ENCODE measurements at regions of chr11 and their contacts with region 1.

Region 1: GRCh38 chr11:101323997-101324396 is 194.4 kb upstream of the PGR start:
- DNase-seq: no peak
- ATAC-seq: peak; percentile 58; the same call in 1 of the 2 replicates
- H3K4me3 ChIP-seq: no peak overlapping the region
- H3K27ac ChIP-seq: no peak overlapping the region
- H3K4me1 ChIP-seq: no peaks in the 10 kb centered on the region
- H3K27me3 ChIP-seq: peaks cover 15% of the 10 kb centered on the region
- CTCF ChIP-seq: peak in 2 of 3 experiments; percentile 11 to 33; a peak in 1 of 6 replicates
- POLR2A ChIP-seq: no peak
- RAD21 ChIP-seq: peak; percentile 50

Region 2: GRCh38 chr11:100980156-100980555 is 343.8 kb before region 1 on chr11:
- CTCF ChIA-PET with region 1: interaction called, 10 read pairs
- POLR2A ChIA-PET with region 1: no interaction called
- RAD21 ChIA-PET with region 1: no interaction called
- intact Hi-C with region 1: loop called (anchors 2 kb)
- DNase-seq: no peak
- ATAC-seq: no peak
- H3K4me3 ChIP-seq: no peak overlapping the region
- H3K27ac ChIP-seq: no peak overlapping the region
- H3K4me1 ChIP-seq: no peaks in the 10 kb centered on the region
- H3K27me3 ChIP-seq: no peaks in the 10 kb centered on the region
- CTCF ChIP-seq: peak; percentile 28 to 43 (median 34); a peak in 5 of 6 replicates
- POLR2A ChIP-seq: no peak
- RAD21 ChIP-seq: peak; percentile 54

Region 3: DNA sequence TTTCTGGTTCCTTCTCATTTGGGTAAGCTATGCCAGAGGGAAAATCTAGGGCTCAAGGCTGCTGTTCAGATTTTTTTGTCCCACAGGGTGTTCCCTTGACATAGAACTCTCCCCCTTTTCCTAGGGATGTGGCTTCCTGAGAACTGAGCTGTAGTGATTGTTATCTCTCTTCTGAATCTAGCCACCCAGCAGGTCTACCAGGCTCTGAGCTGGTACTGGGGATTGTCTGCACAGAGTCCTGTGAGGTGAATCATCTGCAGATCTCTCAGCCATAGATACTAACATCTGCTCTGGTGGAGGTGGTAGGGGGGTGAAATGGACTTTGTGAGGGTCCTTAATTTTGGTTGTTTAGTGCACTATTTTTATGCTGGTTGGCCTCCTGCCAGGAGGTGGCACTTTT is 27.1 kb before region 1 on chr11:
- CTCF ChIA-PET with region 1: no interaction called
- POLR2A ChIA-PET with region 1: no interaction called
- RAD21 ChIA-PET with region 1: no interaction called
- intact Hi-C with region 1: no loop called
- DNase-seq: no peak
- ATAC-seq: no peak
- H3K4me3 ChIP-seq: no peak overlapping the region
- H3K27ac ChIP-seq: no peak overlapping the region
- H3K4me1 ChIP-seq: no peaks in the 10 kb centered on the region
- H3K27me3 ChIP-seq: no peaks in the 10 kb centered on the region
- CTCF ChIP-seq: no peak
- POLR2A ChIP-seq: no peak
- RAD21 ChIP-seq: no peak